AG04450 (cell line): ENCODE measurements at regions of chr1 and their contacts with region 1.

Region 1: GRCh38 chr1:229558571-229559335 is at the start of gene ABCB10:
- DNase-seq: peak; percentile 87
- H3K4me3 ChIP-seq: peak within 1 kb of the TSS; percentile 81
- H3K27ac ChIP-seq: peak within 1 kb of the TSS; percentile 21
- H3K27me3 ChIP-seq: no peaks in the 10 kb centered on the region
- CTCF ChIP-seq: peak; percentile 74
- polyA plus RNA-seq, gene ABCB10: 8.7 and 10.3 TPM in 2 replicates

Region 2: GRCh38 chr1:228955691-228956090 is 603.1 kb before region 1 on chr1:
- CTCF ChIA-PET with region 1: no interaction called
- POLR2A ChIA-PET with region 1: no interaction called
- DNase-seq: peak; percentile 18
- H3K4me3 ChIP-seq: no peak overlapping the region
- H3K27ac ChIP-seq: no peak overlapping the region
- H3K27me3 ChIP-seq: no peaks in the 10 kb centered on the region
- CTCF ChIP-seq: no peak

Region 3: GRCh38 chr1:229230893-229231753 is 327.6 kb before region 1 on chr1:
- CTCF ChIA-PET with region 1: no interaction called
- POLR2A ChIA-PET with region 1: no interaction called
- DNase-seq: no peak
- H3K4me3 ChIP-seq: no peak overlapping the region
- H3K27ac ChIP-seq: no peak overlapping the region
- H3K27me3 ChIP-seq: peaks cover 24% of the 10 kb centered on the region
- CTCF ChIP-seq: no peak

Region 4: GRCh38 chr1:229547542-229547941 is 11.2 kb before region 1 on chr1:
- CTCF ChIA-PET with region 1: interaction called, 15 read pairs
- POLR2A ChIA-PET with region 1: no interaction called
- DNase-seq: no peak
- H3K4me3 ChIP-seq: no peak overlapping the region
- H3K27ac ChIP-seq: no peak overlapping the region
- H3K27me3 ChIP-seq: no peaks in the 10 kb centered on the region
- CTCF ChIP-seq: no peak

Region 5: GRCh38 chr1:229572286-229572685 is 13.5 kb after region 1 on chr1:
- CTCF ChIA-PET with region 1: interaction called, 22 read pairs
- POLR2A ChIA-PET with region 1: no interaction called
- DNase-seq: no peak
- H3K4me3 ChIP-seq: no peak overlapping the region
- H3K27ac ChIP-seq: no peak overlapping the region
- H3K27me3 ChIP-seq: no peaks in the 10 kb centered on the region
- CTCF ChIP-seq: no peak

Region 6: GRCh38 chr1:229596925-229597699 is 38.4 kb after region 1 on chr1:
- CTCF ChIA-PET with region 1: interaction called, 14 read pairs
- POLR2A ChIA-PET with region 1: no interaction called
- DNase-seq: no peak
- H3K4me3 ChIP-seq: no peak overlapping the region
- H3K27ac ChIP-seq: peak overlapping the region; percentile 93
- H3K27me3 ChIP-seq: no peaks in the 10 kb centered on the region
- CTCF ChIP-seq: no peak

Region 7: GRCh38 chr1:229625915-229626831 is 67.4 kb after region 1 on chr1 and contains the starts of genes TAF5L and URB2:
- CTCF ChIA-PET with region 1: interaction called, 18 read pairs
- POLR2A ChIA-PET with region 1: interaction called, 10 read pairs
- DNase-seq: peak; percentile 65
- H3K4me3 ChIP-seq: peak within 1 kb of the TSS; percentile 93
- H3K27ac ChIP-seq: peak within 1 kb of the TSS; percentile 66
- H3K27me3 ChIP-seq: no peaks in the 10 kb centered on the region
- CTCF ChIP-seq: no peak
- polyA plus RNA-seq, gene TAF5L: 17.3 and 17.9 TPM in 2 replicates
- polyA plus RNA-seq, gene URB2: 6.2 and 6.4 TPM in 2 replicates

Region 8: DNA sequence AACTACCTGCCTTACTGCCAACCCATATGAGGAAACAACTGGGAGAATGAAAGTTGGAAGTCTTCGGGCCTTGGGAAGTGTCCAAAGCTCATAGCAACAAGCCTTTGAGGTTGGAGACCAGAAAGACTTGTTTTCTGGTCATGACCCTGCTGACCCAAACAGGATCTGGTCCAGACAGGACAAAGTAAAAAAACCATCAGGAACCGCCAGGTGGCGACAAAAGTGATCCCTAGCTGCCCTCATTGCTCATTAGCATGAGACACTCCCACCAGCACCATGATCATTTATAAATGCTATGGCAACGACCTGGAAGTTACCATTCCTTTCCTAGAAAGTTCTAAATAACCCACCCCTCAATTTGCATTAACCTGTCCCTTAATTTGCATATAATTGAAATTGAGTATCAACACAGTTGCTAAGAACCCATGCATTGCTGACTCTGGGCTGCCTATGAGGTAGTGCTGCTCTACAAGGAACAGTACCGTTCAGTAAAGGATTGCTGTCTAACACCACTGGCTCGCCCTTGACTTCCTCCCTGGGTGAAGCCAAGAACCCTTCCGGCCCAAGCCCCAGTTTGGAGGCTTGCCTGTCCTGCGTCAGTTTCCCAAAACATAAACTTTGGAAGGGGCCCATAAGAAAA is 156.3 kb after region 1 on chr1:
- CTCF ChIA-PET with region 1: no interaction called
- POLR2A ChIA-PET with region 1: no interaction called
- DNase-seq: no peak
- H3K4me3 ChIP-seq: no peak overlapping the region
- H3K27ac ChIP-seq: no peak overlapping the region
- H3K27me3 ChIP-seq: no peaks in the 10 kb centered on the region
- CTCF ChIP-seq: peak; percentile 49

Region 9: GRCh38 chr1:230426246-230427093 is 867.7 kb after region 1 on chr1 and contains the start of gene PGBD5:
- CTCF ChIA-PET with region 1: no interaction called
- POLR2A ChIA-PET with region 1: no interaction called
- DNase-seq: no peak
- H3K4me3 ChIP-seq: peak within 1 kb of the TSS; percentile 53
- H3K27ac ChIP-seq: no peak within 1 kb of the TSS
- H3K27me3 ChIP-seq: peaks cover 31% of the 10 kb centered on the region
- CTCF ChIP-seq: no peak
- polyA plus RNA-seq, gene PGBD5: 1.0 and 1.1 TPM in 2 replicates